ENCODE measurements at regions of chr18 and their contacts with region 1.

Region 1: GRCh38 chr18:42114310-42114943 is 159.4 kb downstream of the PIK3C3 start:
- DNase-seq: peak; percentile 64
- ATAC-seq: no peak
- H3K4me3 ChIP-seq: no peak overlapping the region
- H3K4me3 Mint-ChIP-seq: no peak overlapping the region
- H3K27ac ChIP-seq: no peak overlapping the region
- H3K27ac Mint-ChIP-seq: no peak overlapping the region
- H3K4me1 ChIP-seq: peaks cover 7 to 10% of the 10 kb centered on the region in 2 donors
- H3K4me1 Mint-ChIP-seq: peaks cover 9% of the 10 kb centered on the region
- H3K27me3 ChIP-seq: no peaks in the 10 kb centered on the region
- H3K27me3 Mint-ChIP-seq: peaks cover 10% of the 10 kb centered on the region
- CTCF ChIP-seq: peak; percentile 92

Region 2: DNA sequence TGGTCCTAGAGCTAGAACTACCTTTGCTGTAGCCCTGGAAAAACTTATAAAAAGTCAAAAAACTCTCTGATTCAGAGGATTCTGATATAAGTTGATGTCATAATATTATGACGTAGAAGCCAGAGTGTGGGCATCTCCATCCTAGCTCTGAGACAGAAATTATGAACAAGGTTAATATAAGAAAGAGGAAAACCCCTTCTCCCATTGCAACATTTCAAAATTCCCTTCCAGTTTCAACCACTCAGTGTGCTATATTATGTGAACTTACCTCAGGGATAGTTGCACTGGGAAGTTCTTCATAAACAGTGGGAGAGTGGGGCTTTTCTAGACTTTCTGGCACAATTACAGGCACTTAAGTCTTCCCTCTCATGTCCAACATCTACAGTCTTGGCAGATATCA is 12.2 kb after region 1 on chr18:
- CTCF ChIA-PET with region 1: interaction called, 20 read pairs
- POLR2A ChIA-PET with region 1: no interaction called
- intact Hi-C with region 1: no loop called
- DNase-seq: no peak
- ATAC-seq: no peak
- H3K4me3 ChIP-seq: no peak overlapping the region
- H3K4me3 Mint-ChIP-seq: no peak overlapping the region
- H3K27ac ChIP-seq: no peak overlapping the region
- H3K27ac Mint-ChIP-seq: no peak overlapping the region
- H3K4me1 ChIP-seq: no peaks in the 10 kb centered on the region
- H3K4me1 Mint-ChIP-seq: no peaks in the 10 kb centered on the region
- H3K27me3 ChIP-seq: no peaks in the 10 kb centered on the region
- H3K27me3 Mint-ChIP-seq: peaks cover 11% of the 10 kb centered on the region
- CTCF ChIP-seq: no peak

Region 3: DNA sequence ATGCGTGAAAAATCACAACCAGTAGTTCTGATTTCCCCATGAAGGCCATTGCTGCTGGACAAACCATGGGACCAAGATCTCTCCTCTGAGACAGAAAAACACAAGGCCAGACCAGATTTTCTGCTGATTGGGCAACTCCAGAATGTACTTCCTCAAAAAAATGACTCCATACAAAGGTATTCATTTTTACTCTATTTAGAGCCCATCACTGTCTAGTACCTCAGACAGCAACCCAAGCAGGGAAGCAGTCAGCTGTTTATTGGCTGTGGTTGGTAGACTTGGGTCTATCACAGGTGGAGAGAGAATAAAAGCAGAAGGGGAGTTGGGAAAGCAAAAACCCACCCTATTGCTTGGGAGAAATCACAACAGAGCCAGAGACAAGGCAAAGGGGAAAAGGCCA is 60.5 kb after region 1 on chr18:
- CTCF ChIA-PET with region 1: no interaction called
- POLR2A ChIA-PET with region 1: no interaction called
- intact Hi-C with region 1: no loop called
- DNase-seq: no peak
- ATAC-seq: no peak
- H3K4me3 ChIP-seq: no peak overlapping the region
- H3K4me3 Mint-ChIP-seq: no peak overlapping the region
- H3K27ac ChIP-seq: no peak overlapping the region
- H3K27ac Mint-ChIP-seq: no peak overlapping the region
- H3K4me1 ChIP-seq: no peaks in the 10 kb centered on the region
- H3K4me1 Mint-ChIP-seq: no peaks in the 10 kb centered on the region
- H3K27me3 ChIP-seq: no peaks in the 10 kb centered on the region
- H3K27me3 Mint-ChIP-seq: peaks cover 4% of the 10 kb centered on the region
- CTCF ChIP-seq: no peak

Region 4: DNA sequence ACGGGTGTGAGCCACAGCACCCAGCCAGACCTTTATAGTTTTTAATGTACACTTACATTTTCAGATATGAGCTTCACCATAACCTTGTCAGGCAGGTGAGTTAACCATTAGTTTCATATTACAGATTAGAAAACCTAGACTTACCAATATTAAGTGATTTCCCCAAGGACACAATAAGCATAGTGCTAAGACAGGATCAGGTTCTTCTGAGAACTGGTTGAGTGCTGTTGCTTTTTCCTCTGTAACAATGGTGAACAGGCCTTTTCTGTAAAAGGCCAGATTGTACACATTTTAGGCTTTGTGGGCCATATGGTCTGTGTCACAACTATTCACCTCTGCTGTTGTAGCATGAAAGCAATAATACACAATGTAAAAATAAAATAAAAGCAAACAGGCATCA is 172.6 kb after region 1 on chr18:
- CTCF ChIA-PET with region 1: no interaction called
- POLR2A ChIA-PET with region 1: no interaction called
- intact Hi-C with region 1: no loop called
- DNase-seq: no peak
- ATAC-seq: no peak
- H3K4me3 ChIP-seq: no peak overlapping the region
- H3K4me3 Mint-ChIP-seq: no peak overlapping the region
- H3K27ac ChIP-seq: no peak overlapping the region
- H3K27ac Mint-ChIP-seq: no peak overlapping the region
- H3K4me1 ChIP-seq: no peaks in the 10 kb centered on the region
- H3K4me1 Mint-ChIP-seq: no peaks in the 10 kb centered on the region
- H3K27me3 ChIP-seq: no peaks in the 10 kb centered on the region
- H3K27me3 Mint-ChIP-seq: no peaks in the 10 kb centered on the region
- CTCF ChIP-seq: no peak

Region 5: DNA sequence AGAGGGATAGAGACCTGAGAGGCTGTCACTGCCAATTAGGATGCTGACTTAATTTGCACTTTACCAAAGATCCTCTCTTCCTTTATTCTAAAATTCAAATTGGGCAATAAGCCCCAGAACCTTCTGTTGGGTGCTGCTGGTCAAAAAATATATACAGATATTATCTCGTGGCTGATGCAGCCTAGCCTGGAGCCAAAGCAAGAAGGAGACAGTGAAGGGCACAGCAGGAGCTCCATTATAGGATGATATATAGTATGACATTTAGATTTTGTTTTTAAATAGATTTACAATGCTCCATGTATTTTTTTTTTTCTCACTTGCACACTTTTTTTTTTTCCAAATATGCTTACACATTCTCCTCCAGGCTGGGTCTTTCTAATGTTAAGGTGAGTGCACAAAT is 419.9 kb after region 1 on chr18:
- CTCF ChIA-PET with region 1: no interaction called
- POLR2A ChIA-PET with region 1: no interaction called
- intact Hi-C with region 1: no loop called
- DNase-seq: no peak
- ATAC-seq: no peak
- H3K4me3 ChIP-seq: no peak overlapping the region
- H3K4me3 Mint-ChIP-seq: no peak overlapping the region
- H3K27ac ChIP-seq: no peak overlapping the region
- H3K27ac Mint-ChIP-seq: no peak overlapping the region
- H3K4me1 ChIP-seq: no peaks in the 10 kb centered on the region
- H3K4me1 Mint-ChIP-seq: no peaks in the 10 kb centered on the region
- H3K27me3 ChIP-seq: no peaks in the 10 kb centered on the region
- H3K27me3 Mint-ChIP-seq: no peaks in the 10 kb centered on the region
- CTCF ChIP-seq: no peak

Region 6: GRCh38 chr18:43271593-43272432 is 1157.4 kb after region 1 on chr18:
- CTCF ChIA-PET with region 1: interaction called, 83 read pairs
- POLR2A ChIA-PET with region 1: no interaction called
- intact Hi-C with region 1: no loop called
- DNase-seq: peak; percentile 35
- ATAC-seq: no peak
- H3K4me3 ChIP-seq: no peak overlapping the region
- H3K4me3 Mint-ChIP-seq: no peak overlapping the region
- H3K27ac ChIP-seq: no peak overlapping the region
- H3K27ac Mint-ChIP-seq: no peak overlapping the region
- H3K4me1 ChIP-seq: no peaks in the 10 kb centered on the region
- H3K4me1 Mint-ChIP-seq: no peaks in the 10 kb centered on the region
- H3K27me3 ChIP-seq: no peaks in the 10 kb centered on the region
- H3K27me3 Mint-ChIP-seq: peaks cover under 1% of the 10 kb centered on the region
- CTCF ChIP-seq: peak; percentile 95

Region 7: GRCh38 chr18:43587538-43588153 is 1473.2 kb after region 1 on chr18:
- CTCF ChIA-PET with region 1: interaction called, 37 read pairs
- POLR2A ChIA-PET with region 1: no interaction called
- intact Hi-C with region 1: no loop called
- DNase-seq: peak; percentile 23
- ATAC-seq: no peak
- H3K4me3 ChIP-seq: no peak overlapping the region
- H3K4me3 Mint-ChIP-seq: no peak overlapping the region
- H3K27ac ChIP-seq: no peak overlapping the region
- H3K27ac Mint-ChIP-seq: no peak overlapping the region
- H3K4me1 ChIP-seq: no peaks in the 10 kb centered on the region
- H3K4me1 Mint-ChIP-seq: no peaks in the 10 kb centered on the region
- H3K27me3 ChIP-seq: no peaks in the 10 kb centered on the region
- H3K27me3 Mint-ChIP-seq: peaks cover 4% of the 10 kb centered on the region
- CTCF ChIP-seq: peak; percentile 81

Measured in B cell (primary cell).